Activated T-helper 1 cell treated with anti-CD3 and anti-CD28 coated beads, Interleukin-12 subunit alpha, Interleukin-12 subunit beta, Interleukin-2, Interleukin-4 antibody, amounts not matched to agents 30 ng/mL and 10 ng/mL and 1 ng/mL, durations not matched to agents 14 hours and 24 hours and 36 hours (primary cell): ENCODE measurements at regions of chr2 and their contacts with region 1.

Region 1: DNA sequence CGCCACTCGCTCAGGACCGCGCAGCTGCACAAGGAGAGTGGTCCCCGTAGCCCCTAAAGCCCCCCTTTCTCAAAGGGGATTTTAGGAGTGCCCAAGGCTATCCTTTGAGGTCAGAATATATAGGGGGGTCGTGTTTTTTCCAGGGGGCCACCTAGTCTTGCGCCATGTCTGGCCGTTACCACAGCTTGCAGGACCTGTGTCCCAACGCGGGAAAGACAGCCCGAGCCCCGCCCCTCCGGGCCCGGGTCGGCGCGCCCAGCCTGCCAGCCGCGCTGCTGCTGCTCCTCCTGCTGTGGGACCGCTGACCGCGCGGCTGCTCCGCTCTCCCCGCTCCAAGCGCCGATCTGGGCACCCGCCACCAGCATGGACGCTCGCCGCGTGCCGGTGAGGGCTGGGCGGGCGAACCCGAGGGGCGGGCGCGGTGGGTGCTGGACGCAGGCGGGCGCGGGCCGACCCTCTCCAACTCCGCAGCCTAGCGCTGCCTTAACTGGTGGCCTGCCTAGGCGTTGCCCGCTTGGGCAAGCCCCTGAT is at the start of gene CDCA7:
- DNase-seq: peak; percentile 77
- H3K4me3 Mint-ChIP-seq: peak within 1 kb of the TSS; percentile 93
- H3K27ac Mint-ChIP-seq: peak within 1 kb of the TSS; percentile 97
- H3K4me1 Mint-ChIP-seq: peaks cover 54% of the 10 kb centered on the region
- H3K27me3 Mint-ChIP-seq: peaks cover 2% of the 10 kb centered on the region
- total RNA-seq, gene CDCA7: 112 and 115 TPM in 2 replicates

Region 2: DNA sequence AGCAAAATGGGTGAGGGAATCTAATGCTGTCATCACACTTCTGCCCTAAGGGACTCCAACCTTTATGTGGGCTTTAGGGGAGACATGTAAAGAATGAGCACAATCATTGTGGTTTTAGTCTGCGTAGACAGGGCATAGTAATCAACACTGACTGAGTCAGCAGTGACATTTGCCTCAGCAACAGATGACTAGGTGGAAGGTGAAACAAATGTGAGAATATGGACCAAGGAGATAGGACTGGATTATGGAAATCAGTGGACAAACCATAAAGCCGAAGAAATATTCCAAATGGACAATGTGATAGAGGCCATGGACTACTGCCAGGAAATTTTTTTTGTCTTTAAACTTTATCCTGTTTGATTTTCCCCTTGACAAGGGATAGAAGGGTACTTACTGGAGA is 714.8 kb before region 1 on chr2:
- intact Hi-C with region 1: no loop called
- DNase-seq: no peak
- H3K4me3 Mint-ChIP-seq: no peak overlapping the region
- H3K27ac Mint-ChIP-seq: no peak overlapping the region
- H3K4me1 Mint-ChIP-seq: peaks cover 7% of the 10 kb centered on the region
- H3K27me3 Mint-ChIP-seq: no peaks in the 10 kb centered on the region

Region 3: GRCh38 chr2:173027181-173028128 is 327.2 kb before region 1 on chr2:
- intact Hi-C with region 1: loop called (anchors 1 kb)
- DNase-seq: peak; percentile 57
- H3K4me3 Mint-ChIP-seq: no peak overlapping the region
- H3K27ac Mint-ChIP-seq: no peak overlapping the region
- H3K4me1 Mint-ChIP-seq: no peaks in the 10 kb centered on the region
- H3K27me3 Mint-ChIP-seq: peaks cover 11% of the 10 kb centered on the region

Region 4: DNA sequence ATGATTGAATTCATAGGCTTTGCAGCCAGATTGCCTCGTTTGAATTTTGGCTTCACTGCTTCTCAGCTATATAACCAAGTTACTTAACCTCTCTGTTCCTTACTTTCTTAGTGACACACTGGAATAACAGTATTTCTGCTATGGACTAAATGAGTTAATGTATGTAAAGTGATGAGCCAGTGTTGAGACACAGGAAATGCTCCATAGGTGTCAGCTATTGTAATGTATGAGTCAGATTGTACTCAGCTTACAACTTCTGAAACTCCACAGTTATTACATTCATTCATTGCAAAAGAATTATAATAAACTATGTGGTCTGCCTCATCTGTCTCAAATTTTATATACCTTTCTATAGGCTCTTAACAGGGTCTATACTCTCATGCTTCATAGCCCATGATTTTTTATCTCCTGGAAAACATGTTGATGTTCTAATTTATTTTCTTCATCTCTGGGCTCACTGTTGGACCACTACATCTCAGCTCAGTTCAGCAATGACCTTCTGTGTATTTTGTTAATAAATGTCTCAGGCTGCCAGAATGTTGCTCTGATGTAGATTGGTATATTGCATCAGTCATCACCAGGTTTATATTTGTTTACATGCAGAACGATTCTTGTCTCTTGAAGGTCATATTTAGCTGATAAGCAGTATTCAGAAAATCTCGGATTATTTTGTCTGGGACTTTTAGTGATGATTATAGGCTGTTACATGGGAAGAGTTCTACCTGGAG is 202.8 kb before region 1 on chr2:
- intact Hi-C with region 1: loop called (anchors 5 kb)
- DNase-seq: no peak
- H3K4me3 Mint-ChIP-seq: peak overlapping the region; percentile 53
- H3K27ac Mint-ChIP-seq: peak overlapping the region; percentile 77
- H3K4me1 Mint-ChIP-seq: peaks cover 64% of the 10 kb centered on the region
- H3K27me3 Mint-ChIP-seq: peaks cover 4% of the 10 kb centered on the region

Region 5: DNA sequence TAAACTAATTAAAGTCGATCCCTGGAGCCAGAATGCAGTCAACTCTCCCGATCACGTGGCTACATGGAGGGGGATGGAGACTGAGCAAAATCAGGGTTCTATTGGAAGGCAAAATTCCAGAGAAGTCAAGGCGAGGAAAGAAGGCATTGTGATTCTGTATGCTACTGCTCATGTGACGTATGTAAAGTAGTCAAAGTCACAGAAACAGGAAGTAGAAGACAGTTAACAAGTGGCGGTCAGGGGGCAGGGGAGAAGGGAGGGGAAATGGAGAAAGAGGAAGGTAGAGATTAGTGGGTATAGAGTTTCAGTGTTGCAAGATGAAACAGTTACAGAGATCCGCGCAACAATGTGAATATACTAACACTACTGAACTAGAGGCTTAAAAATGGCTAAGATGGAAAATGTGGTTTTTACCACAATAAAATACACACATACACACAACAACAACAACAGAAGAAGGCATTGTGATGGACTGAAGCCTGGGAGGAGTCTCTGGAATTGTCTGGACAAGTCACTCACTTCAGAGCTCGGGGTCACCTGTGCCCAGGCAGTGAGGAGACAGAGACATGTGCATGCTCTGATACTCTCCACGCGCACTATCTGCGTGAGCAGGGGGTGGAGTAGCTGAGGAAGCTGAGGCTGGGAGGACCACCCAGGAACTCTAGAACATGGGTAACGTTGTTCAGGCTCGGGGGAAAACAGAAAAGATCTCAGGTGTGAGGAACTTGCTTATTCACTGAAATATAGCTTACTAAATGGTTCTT is 89.9 kb before region 1 on chr2:
- intact Hi-C with region 1: loop called (anchors 1 kb)
- DNase-seq: peak; percentile 8
- H3K4me3 Mint-ChIP-seq: peak overlapping the region; percentile 16
- H3K27ac Mint-ChIP-seq: peak overlapping the region; percentile 9
- H3K4me1 Mint-ChIP-seq: peaks cover 20% of the 10 kb centered on the region
- H3K27me3 Mint-ChIP-seq: no peaks in the 10 kb centered on the region

Region 6: DNA sequence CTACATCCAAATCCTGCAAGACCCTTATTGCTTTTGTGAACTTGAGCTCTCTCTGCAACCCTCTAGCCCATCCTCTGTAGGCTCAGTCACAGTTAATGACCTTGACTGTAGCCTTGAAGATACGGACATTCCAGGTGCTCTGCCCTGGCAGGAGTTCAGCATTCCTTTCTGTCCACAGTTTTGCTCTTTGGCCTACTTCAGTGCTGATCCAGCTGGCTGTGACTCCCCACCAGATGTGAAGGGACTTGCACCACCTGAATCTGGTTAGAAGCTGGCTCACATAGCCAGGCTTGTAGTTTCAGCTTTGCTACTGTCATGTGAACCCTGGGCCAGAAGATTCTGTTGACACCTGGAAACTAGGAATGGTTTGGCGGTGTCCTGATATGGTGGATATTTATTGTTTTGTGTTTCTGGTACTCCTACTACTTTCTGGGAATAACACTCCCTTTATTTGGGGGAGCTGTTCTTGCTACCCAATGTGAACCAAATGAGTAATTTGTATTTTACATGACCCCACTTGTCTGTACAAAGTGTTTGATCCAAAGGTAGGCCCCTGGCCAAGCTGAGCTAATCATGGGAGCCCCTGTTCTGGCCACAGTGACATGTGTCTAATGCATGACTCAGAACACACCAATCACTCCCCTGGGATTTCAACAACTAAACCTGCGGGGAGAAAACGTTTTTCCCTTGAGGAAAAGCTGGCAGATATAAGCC is 73.4 kb after region 1 on chr2:
- intact Hi-C with region 1: no loop called
- DNase-seq: no peak
- H3K4me3 Mint-ChIP-seq: no peak overlapping the region
- H3K27ac Mint-ChIP-seq: no peak overlapping the region
- H3K4me1 Mint-ChIP-seq: no peaks in the 10 kb centered on the region
- H3K27me3 Mint-ChIP-seq: peaks cover 10% of the 10 kb centered on the region

Region 7: DNA sequence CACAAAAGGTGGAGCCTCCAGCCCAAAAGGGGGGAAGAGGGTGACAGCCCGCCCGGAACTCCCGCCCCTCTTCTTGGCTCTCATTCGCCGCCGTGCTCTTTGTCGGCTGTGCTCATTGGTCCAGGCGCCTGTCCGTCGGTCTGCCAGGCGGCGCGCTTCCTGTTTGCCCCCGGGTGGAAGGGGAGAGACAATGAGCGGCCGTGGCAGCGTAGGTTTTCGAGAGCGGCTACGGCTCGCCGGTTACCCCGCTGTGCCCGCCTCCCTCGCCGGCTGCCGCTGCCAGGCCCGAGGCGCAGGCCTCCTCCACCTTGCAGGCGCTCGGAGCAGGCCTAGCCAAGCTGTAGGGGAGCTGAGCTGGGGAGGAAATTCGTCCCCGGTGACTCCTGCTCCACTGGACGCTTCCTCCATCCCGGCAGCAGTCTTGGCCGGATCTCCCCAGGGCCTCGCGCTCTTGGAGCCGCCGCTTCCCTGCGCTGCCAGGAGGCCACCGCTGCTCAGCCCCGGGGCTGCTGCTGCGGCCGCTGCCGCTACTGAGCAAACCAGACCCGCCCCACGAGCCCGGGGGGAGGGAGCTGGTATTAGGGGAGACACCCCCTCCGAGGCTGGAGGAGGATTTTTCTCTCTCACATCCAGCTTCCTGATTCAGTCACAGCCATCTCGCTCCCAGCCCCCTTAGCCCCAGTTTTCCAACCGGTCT is 610.8 kb after region 1 on chr2 and contains the start of gene SP3:
- intact Hi-C with region 1: loop called (anchors 5 kb)
- DNase-seq: peak; percentile 94
- H3K4me3 Mint-ChIP-seq: peak within 1 kb of the TSS; percentile 93
- H3K27ac Mint-ChIP-seq: peak within 1 kb of the TSS; percentile 99
- H3K4me1 Mint-ChIP-seq: peaks cover 37% of the 10 kb centered on the region
- H3K27me3 Mint-ChIP-seq: no peaks in the 10 kb centered on the region
- total RNA-seq, gene SP3: 95.8 and 103 TPM in 2 replicates

Region 8: DNA sequence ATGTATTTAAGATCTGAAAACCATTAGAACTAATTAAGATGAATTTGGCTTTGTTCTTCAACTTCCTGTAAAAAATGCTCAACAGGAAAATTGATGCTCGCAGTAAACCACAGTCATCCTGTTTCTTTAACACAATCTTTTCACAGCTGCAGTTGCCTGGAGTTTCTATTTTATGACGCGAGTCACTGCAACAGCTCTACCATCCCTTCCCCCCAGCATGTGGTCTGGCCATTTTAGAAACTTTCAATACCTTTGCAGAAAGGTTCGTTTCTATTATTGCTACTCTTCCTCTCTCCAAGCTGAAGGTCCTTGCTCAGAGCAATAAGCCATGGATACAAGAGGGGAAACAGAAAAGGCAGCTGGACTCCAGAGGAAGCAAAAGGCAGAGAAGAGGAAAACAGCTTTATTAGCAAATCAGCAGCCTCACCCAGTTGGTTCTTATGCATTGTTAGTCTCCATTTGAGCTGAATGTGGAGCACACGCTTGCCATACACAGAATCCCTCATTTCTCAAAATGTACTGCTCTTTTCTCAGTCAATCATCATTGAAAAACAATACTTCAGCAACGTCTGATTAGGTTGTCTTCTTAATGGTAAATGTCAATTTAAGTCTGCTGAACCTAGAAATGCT is 1239.0 kb after region 1 on chr2:
- intact Hi-C with region 1: loop called (anchors 10 kb)
- DNase-seq: peak; percentile 69
- H3K4me3 Mint-ChIP-seq: peak overlapping the region; percentile 86
- H3K27ac Mint-ChIP-seq: peak overlapping the region; percentile 98
- H3K4me1 Mint-ChIP-seq: peaks cover 58% of the 10 kb centered on the region
- H3K27me3 Mint-ChIP-seq: no peaks in the 10 kb centered on the region